ENCODE measurements at regions of chr6 and their contacts with region 1.

Region 1: GRCh38 chr6:164106345-164106769 is 691.8 kb downstream of the QKI start:
- DNase-seq: peak; percentile 58
- CTCF ChIP-seq: no peak

Region 2: GRCh38 chr6:163413345-163414116 is 692.8 kb before region 1 on chr6:
- in situ Hi-C with region 1: loop called (anchors 25 kb)
- DNase-seq: peak; percentile 97
- CTCF ChIP-seq: no peak